Activated T-helper 1 cell treated with anti-CD3 and anti-CD28 coated beads, Interleukin-12 subunit alpha, Interleukin-12 subunit beta, Interleukin-2, Interleukin-4 antibody, amounts not matched to agents 30 ng/mL and 10 ng/mL and 1 ng/mL, durations not matched to agents 14 hours and 24 hours and 36 hours (primary cell): ENCODE measurements at regions of chr3 and their contacts with region 1.

Region 1: DNA sequence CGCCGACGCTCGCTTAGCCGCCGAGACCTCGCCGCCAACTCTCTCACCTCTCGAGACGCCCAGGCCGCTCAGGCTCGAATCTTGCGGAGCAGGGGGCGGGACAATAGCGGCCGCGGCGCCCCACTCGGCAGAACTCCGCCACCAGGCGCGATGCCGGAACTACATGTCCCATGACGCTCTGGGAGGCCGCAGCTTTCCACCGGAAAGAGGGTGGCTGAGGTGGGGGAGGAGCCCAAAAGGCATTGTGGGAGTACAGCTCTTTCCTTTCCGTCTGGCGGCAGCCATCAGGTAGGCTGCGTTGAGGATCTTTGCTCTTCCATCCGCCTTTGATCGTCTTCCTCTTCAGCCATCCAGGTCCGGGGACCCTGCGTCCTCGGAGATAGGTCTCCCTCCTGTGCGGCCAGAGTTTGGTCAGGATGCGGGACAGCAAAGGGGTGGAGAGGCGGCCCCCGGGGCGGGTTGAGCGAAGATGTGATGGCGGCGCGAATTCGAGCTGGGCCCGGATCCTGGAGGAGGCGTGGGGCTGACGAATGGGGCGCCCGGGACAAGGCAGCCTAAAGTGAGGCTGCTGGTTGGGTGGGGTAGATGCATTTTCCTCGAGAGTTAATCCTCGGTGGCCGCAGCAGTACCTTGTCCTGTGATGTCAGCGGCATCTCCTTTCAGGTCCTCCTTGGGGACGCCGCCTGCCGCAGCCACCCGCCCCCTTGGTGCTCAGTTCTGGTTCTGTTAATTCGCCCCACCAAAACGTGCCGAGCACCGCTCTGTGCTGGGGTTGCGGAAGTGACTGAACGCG is at the starts of genes NKIRAS1 and RPL15:
- DNase-seq: peak; percentile 96
- H3K4me3 Mint-ChIP-seq: peak within 1 kb of the TSS; percentile 99
- H3K27ac Mint-ChIP-seq: peak within 1 kb of the TSS; percentile 97
- H3K4me1 Mint-ChIP-seq: peaks cover 58% of the 10 kb centered on the region
- H3K27me3 Mint-ChIP-seq: peaks cover 8% of the 10 kb centered on the region
- total RNA-seq, gene NKIRAS1: 3.9 and 4.5 TPM in 2 replicates
- total RNA-seq, gene RPL15: 1,696 and 1,756 TPM in 2 replicates

Region 2: GRCh38 chr3:23029001-23029400 is 888.1 kb before region 1 on chr3:
- intact Hi-C with region 1: no loop called
- DNase-seq: no peak
- H3K4me3 Mint-ChIP-seq: no peak overlapping the region
- H3K27ac Mint-ChIP-seq: no peak overlapping the region
- H3K4me1 Mint-ChIP-seq: no peaks in the 10 kb centered on the region
- H3K27me3 Mint-ChIP-seq: no peaks in the 10 kb centered on the region

Region 3: GRCh38 chr3:23202921-23203707 is 714.0 kb before region 1 on chr3 and contains the start of gene UBE2E2:
- intact Hi-C with region 1: loop called (anchors 10 kb)
- DNase-seq: peak; percentile 47
- H3K4me3 Mint-ChIP-seq: peak within 1 kb of the TSS; percentile 91
- H3K27ac Mint-ChIP-seq: peak within 1 kb of the TSS; percentile 78
- H3K4me1 Mint-ChIP-seq: peaks cover 33% of the 10 kb centered on the region
- H3K27me3 Mint-ChIP-seq: peaks cover 40% of the 10 kb centered on the region
- total RNA-seq, gene UBE2E2: 11.8 and 13.9 TPM in 2 replicates

Region 4: GRCh38 chr3:23811919-23812318 is 105.2 kb before region 1 on chr3:
- intact Hi-C with region 1: loop called (anchors 2 kb)
- DNase-seq: no peak
- H3K4me3 Mint-ChIP-seq: peak overlapping the region; percentile 87
- H3K27ac Mint-ChIP-seq: peak overlapping the region; percentile 96
- H3K4me1 Mint-ChIP-seq: peaks cover 70% of the 10 kb centered on the region
- H3K27me3 Mint-ChIP-seq: peaks cover 3% of the 10 kb centered on the region

Region 5: DNA sequence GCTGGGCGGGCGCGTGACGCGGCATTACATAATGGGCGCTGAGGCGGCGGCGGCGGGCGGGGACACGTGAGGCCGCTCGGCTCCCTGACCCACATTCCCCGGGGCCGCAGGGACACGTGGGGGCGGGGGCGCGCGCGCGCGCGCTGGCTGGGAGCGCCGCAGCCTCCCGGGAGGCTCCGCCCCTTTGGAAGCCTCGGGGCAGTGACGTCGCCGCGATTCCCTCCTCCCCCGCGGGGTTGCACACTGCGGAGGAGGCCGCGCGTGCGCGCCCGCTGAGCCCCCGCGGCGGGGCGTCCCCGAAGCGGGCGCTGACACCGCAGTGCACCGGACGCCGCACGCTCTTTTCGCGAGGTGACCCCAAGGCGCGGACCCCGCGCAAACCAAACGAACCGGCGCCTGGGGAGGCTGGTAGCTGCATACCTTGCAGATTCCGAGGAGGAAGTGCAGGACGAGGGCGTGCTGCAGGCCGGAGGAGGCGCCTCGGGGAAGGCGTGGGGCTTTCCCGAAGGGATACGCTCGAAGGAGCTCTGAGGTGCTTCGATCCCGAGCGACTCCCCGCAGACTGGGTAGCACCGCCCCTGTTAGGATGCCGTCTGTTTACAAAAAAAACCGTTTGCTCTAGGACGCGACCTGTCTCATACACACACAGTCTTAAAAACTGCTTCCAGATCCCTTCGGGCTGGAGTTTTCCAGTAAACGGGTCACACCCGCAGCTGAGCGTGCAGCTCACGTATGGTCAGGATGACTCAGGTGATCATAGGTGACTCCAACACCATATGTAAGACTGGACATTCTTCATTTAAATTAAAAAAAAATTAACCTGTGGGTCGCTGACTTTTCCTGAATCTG is 29.0 kb after region 1 on chr3:
- intact Hi-C with region 1: loop called (anchors 1 kb)
- DNase-seq: peak; percentile 90
- H3K4me3 Mint-ChIP-seq: peak overlapping the region; percentile 85
- H3K27ac Mint-ChIP-seq: peak overlapping the region; percentile 86
- H3K4me1 Mint-ChIP-seq: peaks cover 26% of the 10 kb centered on the region
- H3K27me3 Mint-ChIP-seq: peaks cover 24% of the 10 kb centered on the region

Region 6: GRCh38 chr3:24069045-24069444 is 152.0 kb after region 1 on chr3:
- intact Hi-C with region 1: no loop called
- DNase-seq: no peak
- H3K4me3 Mint-ChIP-seq: no peak overlapping the region
- H3K27ac Mint-ChIP-seq: no peak overlapping the region
- H3K4me1 Mint-ChIP-seq: no peaks in the 10 kb centered on the region
- H3K27me3 Mint-ChIP-seq: peaks cover 2% of the 10 kb centered on the region

Region 7: GRCh38 chr3:24154013-24154695 is 237.1 kb after region 1 on chr3:
- intact Hi-C with region 1: loop called (anchors 1 kb)
- DNase-seq: no peak
- H3K4me3 Mint-ChIP-seq: no peak overlapping the region
- H3K27ac Mint-ChIP-seq: peak overlapping the region; percentile 57
- H3K4me1 Mint-ChIP-seq: peaks cover 44% of the 10 kb centered on the region
- H3K27me3 Mint-ChIP-seq: no peaks in the 10 kb centered on the region

Region 8: DNA sequence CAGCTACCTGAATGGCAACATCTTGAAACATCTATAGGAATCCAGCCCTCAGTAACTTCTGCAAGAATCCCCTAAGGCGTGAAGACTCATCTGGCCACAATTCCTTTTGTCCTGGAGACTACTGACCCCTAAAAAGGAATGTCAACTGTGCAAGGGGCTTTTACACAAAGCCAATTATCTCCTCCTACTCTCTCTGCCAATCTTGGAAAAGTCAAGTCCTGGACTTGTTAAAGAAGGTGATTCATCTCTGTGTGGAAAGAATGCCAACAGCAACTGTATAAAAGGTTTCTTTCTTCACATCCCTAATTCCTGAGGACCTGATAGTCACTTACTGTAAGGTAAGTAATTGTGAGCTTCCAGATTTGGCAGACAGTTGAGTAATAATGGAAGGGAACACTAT is 555.3 kb after region 1 on chr3:
- intact Hi-C with region 1: no loop called
- DNase-seq: no peak
- H3K4me3 Mint-ChIP-seq: no peak overlapping the region
- H3K27ac Mint-ChIP-seq: no peak overlapping the region
- H3K4me1 Mint-ChIP-seq: no peaks in the 10 kb centered on the region
- H3K27me3 Mint-ChIP-seq: no peaks in the 10 kb centered on the region